H1 (cell line): ENCODE measurements at regions of chr2 and their contacts with region 1.

Region 1: DNA sequence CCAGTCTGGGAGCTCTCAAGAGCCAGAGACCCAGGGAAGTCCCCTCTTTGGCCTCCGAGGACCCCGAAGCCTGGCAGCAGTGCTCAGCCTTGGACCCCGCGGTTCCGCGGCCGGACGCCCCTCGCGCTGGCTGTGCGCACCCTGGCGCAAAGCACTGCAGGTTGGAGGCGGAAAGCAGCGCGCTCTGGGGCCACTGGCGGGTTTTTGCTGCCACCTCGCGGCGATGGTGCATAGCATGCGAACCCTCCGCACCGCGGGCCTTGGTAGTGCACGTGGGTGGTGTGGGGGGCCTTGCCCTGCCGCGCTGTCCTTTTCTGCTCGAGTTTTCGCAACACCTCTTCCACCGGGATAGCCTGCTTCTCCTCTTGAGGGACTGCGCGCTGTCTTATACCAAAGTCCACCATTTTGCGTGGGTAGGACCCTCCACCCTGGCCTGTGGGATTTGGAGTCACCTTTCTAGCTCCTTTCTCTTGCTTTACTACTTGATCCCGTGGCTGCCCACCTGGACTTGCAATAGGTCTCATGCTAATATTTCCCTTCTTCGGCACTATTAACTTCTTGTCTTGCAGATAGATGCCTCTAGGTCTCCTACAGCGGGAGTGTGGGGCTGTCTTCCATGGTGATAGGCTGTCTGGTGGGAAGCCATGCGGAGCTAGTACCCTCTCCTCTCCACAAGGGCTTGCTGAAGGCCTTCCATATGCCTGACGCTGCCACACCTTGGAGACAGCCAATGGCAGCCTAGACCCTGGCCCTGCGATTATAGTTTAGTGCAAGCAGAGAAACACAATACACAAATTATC is 14.3 kb downstream of the SIX3 start:
- DNase-seq: peak in 1 of 2 experiments; percentile 98
- H3K4me3 ChIP-seq: peak overlapping the region; percentile 2 to 53 (median 40); a peak in 7 of 8 replicates
- H3K27ac ChIP-seq: no peak overlapping the region
- H3K4me1 ChIP-seq: peaks cover 6 to 36% (median 18%) of the 10 kb centered on the region in 4 experiments
- H3K27me3 ChIP-seq: peaks cover 41 to 70% (median 61%) of the 10 kb centered on the region in 4 experiments
- CTCF ChIP-seq: peak in 2 of 3 experiments; percentile 93 to 96; a peak in 3 of 4 replicates
- EP300 ChIP-seq: no peak
- POLR2A ChIP-seq: no peak
- RAD21 ChIP-seq: peak; percentile 93 to 98

Region 2: GRCh38 chr2:44392338-44392943 is 563.4 kb before region 1 on chr2:
- CTCF ChIA-PET with region 1: interaction called, 14 read pairs
- POLR2A ChIA-PET with region 1: no interaction called
- DNase-seq: no peak
- H3K4me3 ChIP-seq: no peak overlapping the region
- H3K27ac ChIP-seq: no peak overlapping the region
- H3K4me1 ChIP-seq: peaks cover 0 to 4% (median under 1%) of the 10 kb centered on the region in 4 experiments; a peak in 1 of 7 replicates
- H3K27me3 ChIP-seq: no peaks in the 10 kb centered on the region
- CTCF ChIP-seq: peak in 2 of 3 experiments; percentile 35 to 37; a peak in 2 of 4 replicates
- EP300 ChIP-seq: no peak
- POLR2A ChIP-seq: no peak
- RAD21 ChIP-seq: peak; percentile 59 to 63

Region 3: GRCh38 chr2:44715671-44716081 is 240.1 kb before region 1 on chr2:
- CTCF ChIA-PET with region 1: interaction called, 13 read pairs
- POLR2A ChIA-PET with region 1: no interaction called
- DNase-seq: peak in 1 of 2 experiments; percentile 47
- H3K4me3 ChIP-seq: no peak overlapping the region
- H3K27ac ChIP-seq: no peak overlapping the region
- H3K4me1 ChIP-seq: no peaks in the 10 kb centered on the region; a peak in 1 of 7 replicates
- H3K27me3 ChIP-seq: no peaks in the 10 kb centered on the region
- CTCF ChIP-seq: peak; percentile 31 to 82 (median 75)
- EP300 ChIP-seq: no peak
- POLR2A ChIP-seq: no peak
- RAD21 ChIP-seq: peak; percentile 94 to 96

Region 4: DNA sequence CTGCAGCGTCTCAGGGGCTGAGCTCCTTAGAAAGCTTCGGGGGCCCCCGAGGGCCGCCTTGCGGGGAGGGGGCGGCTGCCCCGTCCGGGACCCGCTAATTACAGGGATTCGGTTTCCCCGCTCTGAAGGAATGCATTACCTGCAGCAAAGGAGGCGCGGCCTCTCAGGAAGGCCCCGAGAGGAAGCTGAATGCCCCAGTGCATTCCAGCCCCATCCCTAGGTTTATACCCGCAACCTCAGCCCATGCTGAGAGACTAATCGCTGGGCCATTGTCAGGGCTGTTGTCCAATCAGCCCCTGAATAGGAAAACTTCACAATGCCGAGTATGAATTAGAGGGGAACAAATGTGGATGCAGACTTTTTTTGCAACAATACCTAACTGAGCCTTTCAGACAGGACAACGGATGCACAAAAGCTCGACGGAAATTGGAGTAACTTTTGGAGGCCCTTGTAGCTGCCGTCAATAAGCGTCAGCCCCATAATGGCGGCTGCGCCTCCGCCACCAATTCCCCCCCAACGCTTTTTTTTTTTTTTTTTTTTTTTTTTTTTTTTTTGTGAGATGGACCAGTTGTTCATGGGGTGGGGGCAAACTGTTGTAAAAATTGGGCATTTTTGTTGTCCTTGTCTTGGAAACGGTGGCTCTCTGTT is 152.9 kb before region 1 on chr2:
- CTCF ChIA-PET with region 1: interaction called, 15 read pairs
- POLR2A ChIA-PET with region 1: no interaction called
- DNase-seq: peak; percentile 88 to 92
- H3K4me3 ChIP-seq: peak overlapping the region; percentile 33 to 65 (median 44)
- H3K27ac ChIP-seq: no peak overlapping the region
- H3K4me1 ChIP-seq: peaks cover 13 to 46% (median 37%) of the 10 kb centered on the region in 4 experiments
- H3K27me3 ChIP-seq: peaks cover 0 to 5% (median 2%) of the 10 kb centered on the region in 4 experiments; a peak in 3 of 7 replicates
- CTCF ChIP-seq: no peak
- EP300 ChIP-seq: peak in 1 of 2 experiments; percentile 92; a peak in 2 of 3 replicates
- POLR2A ChIP-seq: peak in 1 of 2 experiments; percentile 57; a peak in 1 of 3 replicates
- RAD21 ChIP-seq: no peak; a peak in 1 of 4 replicates

Region 5: DNA sequence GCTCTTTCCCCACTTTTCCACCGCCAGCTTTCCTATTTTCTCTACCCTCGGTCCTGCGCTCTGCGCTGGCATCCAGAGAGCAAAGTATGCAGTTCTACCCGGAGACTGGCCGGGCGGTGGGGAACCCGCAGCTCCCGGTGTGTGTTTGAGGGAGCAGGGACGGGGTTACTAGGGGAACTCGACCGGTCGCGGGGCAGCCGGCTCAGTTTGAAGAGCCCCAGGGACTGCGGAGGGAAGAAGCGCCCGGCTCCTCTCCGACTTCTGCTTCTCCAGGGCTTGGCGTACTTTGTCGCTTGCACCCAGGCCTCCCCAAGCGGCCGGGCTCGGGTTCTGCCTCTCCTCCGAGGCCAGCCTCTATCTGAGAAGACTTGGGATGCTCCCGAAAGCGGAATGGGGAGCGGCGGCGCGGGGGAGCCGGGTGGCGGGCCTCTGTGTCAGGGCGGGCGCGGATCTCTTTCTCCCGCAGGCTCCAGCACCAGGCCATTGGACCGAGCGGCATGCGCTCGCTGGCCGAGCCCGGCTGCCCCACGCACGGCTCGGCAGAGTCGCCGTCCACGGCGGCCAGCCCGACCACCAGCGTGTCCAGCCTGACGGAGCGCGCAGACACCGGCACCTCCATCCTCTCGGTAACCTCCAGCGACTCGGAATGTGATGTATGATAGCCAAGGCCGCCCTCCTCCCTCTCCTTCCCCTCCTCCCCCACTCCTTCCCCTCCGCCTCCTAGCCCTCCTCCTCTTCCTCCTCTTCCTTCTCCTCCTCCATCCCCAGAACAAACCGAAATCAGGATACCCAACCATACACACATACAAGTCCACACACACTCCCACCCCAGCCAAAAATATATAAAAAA is 11.5 kb before region 1 on chr2:
- CTCF ChIA-PET with region 1: interaction called, 16 read pairs
- POLR2A ChIA-PET with region 1: no interaction called
- DNase-seq: peak in 1 of 2 experiments; percentile 80
- H3K4me3 ChIP-seq: peak overlapping the region; percentile 39 to 58 (median 48)
- H3K27ac ChIP-seq: no peak overlapping the region
- H3K4me1 ChIP-seq: peaks cover 6 to 66% (median 45%) of the 10 kb centered on the region in 4 experiments
- H3K27me3 ChIP-seq: peaks cover 73 to 100% (median 93%) of the 10 kb centered on the region in 4 experiments
- CTCF ChIP-seq: no peak
- EP300 ChIP-seq: no peak
- POLR2A ChIP-seq: no peak
- RAD21 ChIP-seq: no peak

Region 6: GRCh38 chr2:45000921-45001868 is 45.4 kb after region 1 on chr2:
- CTCF ChIA-PET with region 1: interaction called, 33 read pairs
- POLR2A ChIA-PET with region 1: interaction called, 3 read pairs
- DNase-seq: peak in 1 of 2 experiments; percentile 83
- H3K4me3 ChIP-seq: peak overlapping the region; percentile 18 to 57 (median 44); a peak in 7 of 8 replicates
- H3K27ac ChIP-seq: no peak overlapping the region
- H3K4me1 ChIP-seq: peaks cover 0 to 21% (median 18%) of the 10 kb centered on the region in 4 experiments; a peak in 5 of 7 replicates
- H3K27me3 ChIP-seq: peaks cover 72 to 89% (median 85%) of the 10 kb centered on the region in 4 experiments
- CTCF ChIP-seq: no peak
- EP300 ChIP-seq: no peak
- POLR2A ChIP-seq: no peak
- RAD21 ChIP-seq: no peak

Region 7: GRCh38 chr2:45199973-45200372 is 244.2 kb after region 1 on chr2:
- CTCF ChIA-PET with region 1: no interaction called
- POLR2A ChIA-PET with region 1: no interaction called
- DNase-seq: peak in 1 of 2 experiments; percentile 20
- H3K4me3 ChIP-seq: no peak overlapping the region
- H3K27ac ChIP-seq: no peak overlapping the region
- H3K4me1 ChIP-seq: no peaks in the 10 kb centered on the region
- H3K27me3 ChIP-seq: no peaks in the 10 kb centered on the region; a peak in 1 of 7 replicates
- CTCF ChIP-seq: no peak
- EP300 ChIP-seq: no peak
- POLR2A ChIP-seq: no peak
- RAD21 ChIP-seq: no peak

Region 8: DNA sequence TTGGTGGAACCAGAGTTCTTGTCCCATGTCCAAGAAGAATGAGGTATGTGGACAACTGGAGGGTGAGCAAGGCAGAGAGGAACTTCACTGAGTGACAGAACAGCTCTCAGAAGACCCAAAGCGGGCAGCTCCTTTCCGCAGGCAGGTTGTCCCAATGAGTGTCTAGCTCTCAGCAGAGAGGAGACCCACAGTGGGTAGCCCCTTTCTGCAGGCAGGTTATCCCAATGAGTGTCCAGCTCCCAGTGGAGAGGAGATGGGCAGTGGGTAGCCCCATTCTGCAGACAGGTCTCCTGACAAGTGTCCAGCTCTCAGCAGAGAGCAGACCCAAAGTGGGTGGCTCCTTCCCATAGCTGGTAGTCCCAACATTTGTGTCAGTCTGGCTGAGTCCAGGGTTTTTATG is 585.7 kb after region 1 on chr2:
- CTCF ChIA-PET with region 1: no interaction called
- POLR2A ChIA-PET with region 1: no interaction called
- DNase-seq: no peak
- H3K4me3 ChIP-seq: no peak overlapping the region
- H3K27ac ChIP-seq: no peak overlapping the region
- H3K4me1 ChIP-seq: no peaks in the 10 kb centered on the region
- H3K27me3 ChIP-seq: no peaks in the 10 kb centered on the region
- CTCF ChIP-seq: no peak
- EP300 ChIP-seq: no peak
- POLR2A ChIP-seq: no peak
- RAD21 ChIP-seq: no peak